Dorsolateral prefrontal cortex (tissue), 120 donors: ENCODE measurements at regions of chr3 and their contacts with region 1.

Region 1: DNA sequence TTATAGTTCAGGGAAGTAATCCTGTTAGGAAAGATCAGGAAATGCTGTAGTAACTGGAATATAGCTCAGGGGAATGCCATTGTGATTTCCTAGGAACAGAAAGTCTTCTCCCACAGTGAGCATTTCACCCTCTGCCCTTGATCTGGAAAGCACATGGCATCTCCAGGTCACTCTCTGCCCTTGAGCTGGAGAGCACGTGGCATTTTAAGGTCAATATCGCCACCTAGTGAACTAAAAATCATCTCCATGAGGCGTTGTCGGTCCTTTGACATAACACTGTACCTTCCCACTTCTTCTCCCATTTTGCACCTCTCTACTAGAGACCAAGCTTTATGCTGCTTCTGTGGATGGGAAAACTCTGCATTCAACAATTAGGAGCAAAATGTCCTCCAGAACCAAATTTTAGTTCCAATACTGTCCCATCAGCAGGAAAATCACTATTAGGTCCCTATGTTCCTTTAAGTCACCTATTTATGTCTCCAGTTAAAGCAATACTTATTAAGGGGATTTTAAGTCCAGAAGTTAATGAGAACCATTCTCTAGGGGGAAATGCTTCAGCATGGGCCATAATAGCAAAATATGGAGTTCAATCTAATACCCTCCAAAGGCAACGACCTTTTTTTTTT is 54.7 kb upstream of the GK5 start:
- DNase-seq: peak in 3 of 10 donors; percentile 18 to 43 (median 21)
- H3K4me3 ChIP-seq: no peak overlapping the region
- H3K27ac ChIP-seq: no peak overlapping the region
- H3K27me3 ChIP-seq: no peaks in the 10 kb centered on the region
- CTCF ChIP-seq: peak in 55 of 56 donors; percentile 47 to 89 (median 70)

Region 2: DNA sequence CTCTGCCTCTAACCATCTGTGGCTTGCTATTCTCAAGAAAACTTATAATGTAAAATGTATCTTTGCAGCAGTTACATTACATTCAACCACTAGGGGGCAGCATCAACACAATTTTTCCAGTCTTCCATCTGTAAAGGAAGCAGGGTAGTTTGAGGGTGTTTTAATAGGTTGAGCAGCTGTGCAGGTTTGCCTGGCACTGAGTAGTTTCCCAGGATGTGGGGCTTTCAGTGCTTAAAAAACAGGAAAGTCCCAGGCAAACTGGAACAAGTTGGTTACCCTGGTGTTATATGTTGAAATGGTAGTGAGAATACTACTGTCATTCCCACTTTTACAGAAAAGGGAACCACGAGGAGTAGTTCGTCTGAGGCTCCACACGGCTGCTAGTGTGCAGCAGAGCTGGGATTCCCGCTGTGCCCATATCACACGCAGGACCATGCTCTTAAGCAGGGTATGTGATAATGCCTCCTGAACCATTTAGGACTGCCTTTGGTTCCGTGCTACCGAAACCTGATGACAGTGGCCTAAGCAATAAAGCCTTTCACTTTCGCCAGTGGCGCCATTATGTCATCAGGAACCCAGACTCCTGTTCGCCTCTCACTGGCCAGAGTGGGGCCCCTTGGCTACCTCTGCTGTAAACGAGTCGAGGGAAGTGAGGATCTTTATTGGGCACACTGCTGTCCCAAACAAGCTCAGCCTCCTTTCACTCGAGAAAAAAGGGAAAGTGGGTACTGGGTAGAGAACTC is 976.4 kb before region 1 on chr3:
- intact Hi-C with region 1: loop called in 1 of 2 experiments (anchors 10 kb)
- DNase-seq: peak in 2 of 10 donors; percentile 58 to 60
- H3K4me3 ChIP-seq: peak overlapping the region in 1 of 59 donors; percentile 2
- H3K27ac ChIP-seq: peak overlapping the region in 9 of 59 donors; percentile 1 to 52 (median 25)
- H3K27me3 ChIP-seq: no peaks in the 10 kb centered on the region
- CTCF ChIP-seq: peak; percentile 70 to 99 (median 88)

Region 3: DNA sequence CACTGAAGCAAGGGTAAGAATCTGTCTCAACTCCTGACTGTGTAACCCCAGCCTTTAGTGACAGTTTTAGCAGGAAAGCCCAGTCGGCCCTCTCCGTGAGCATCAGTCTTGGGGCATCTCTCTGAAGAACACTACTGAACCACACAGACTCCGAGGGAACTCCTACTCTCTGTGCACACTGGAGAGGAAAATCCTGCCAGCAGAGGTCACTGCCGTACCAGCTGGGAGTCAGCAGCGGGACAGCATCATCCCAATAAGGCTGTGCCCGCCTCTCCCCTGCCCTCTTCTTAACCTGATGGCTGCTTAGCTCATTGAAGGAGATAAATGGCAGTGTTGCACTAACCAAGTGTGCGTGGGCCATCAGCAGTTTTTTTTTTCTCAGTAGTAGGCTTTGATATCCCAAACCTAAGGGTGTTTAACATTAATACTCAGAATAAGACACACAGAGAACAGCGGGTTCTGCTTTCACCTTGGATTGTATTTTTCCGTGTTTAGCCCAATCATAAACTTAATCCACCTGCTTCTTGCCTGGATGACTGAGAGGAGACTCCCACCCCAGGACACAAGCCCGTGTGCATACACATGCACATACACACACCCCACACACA is 819.9 kb before region 1 on chr3:
- intact Hi-C with region 1: loop called in 1 of 2 experiments (anchors 10 kb)
- DNase-seq: peak; percentile 80 to 92 (median 88)
- H3K4me3 ChIP-seq: no peak overlapping the region
- H3K27ac ChIP-seq: no peak overlapping the region
- H3K27me3 ChIP-seq: no peaks in the 10 kb centered on the region
- CTCF ChIP-seq: peak; percentile 50 to 98 (median 90)

Region 4: DNA sequence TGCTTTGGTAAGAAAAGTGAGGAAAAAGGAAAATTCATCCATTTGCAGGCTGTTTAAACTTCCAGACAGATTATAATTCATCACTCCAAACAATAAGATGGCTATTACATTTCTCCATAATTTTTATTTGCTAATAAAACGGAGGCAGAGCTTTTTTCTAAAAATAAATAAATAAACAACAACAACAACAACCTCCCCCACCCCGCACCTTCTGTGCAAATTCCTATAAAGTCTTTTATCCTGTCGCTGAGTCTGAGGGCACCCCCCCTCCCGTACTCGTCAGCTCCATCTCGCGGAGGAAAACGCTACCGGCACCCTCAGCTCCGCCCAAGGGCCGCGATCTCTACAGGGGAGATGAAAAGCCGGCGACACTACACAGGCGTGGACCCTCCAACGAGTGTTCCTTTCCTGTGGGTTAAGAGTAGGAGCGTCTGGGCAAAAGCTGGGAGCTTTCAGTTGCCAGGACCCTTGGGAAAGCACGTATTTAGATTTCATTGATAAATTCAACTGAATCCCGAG is 404.6 kb before region 1 on chr3:
- intact Hi-C with region 1: no loop called
- DNase-seq: peak; percentile 72 to 90 (median 85)
- H3K4me3 ChIP-seq: peak overlapping the region; percentile 64 to 98 (median 87)
- H3K27ac ChIP-seq: peak overlapping the region; percentile 78 to 100 (median 98)
- H3K27me3 ChIP-seq: no peaks in the 10 kb centered on the region
- CTCF ChIP-seq: peak; percentile 62 to 91 (median 79)

Region 5: GRCh38 chr3:142022381-142022780 is 257.7 kb before region 1 on chr3:
- intact Hi-C with region 1: loop called in 1 of 2 experiments (anchors 5 kb)
- DNase-seq: no peak
- H3K4me3 ChIP-seq: no peak overlapping the region
- H3K27ac ChIP-seq: no peak overlapping the region
- H3K27me3 ChIP-seq: no peaks in the 10 kb centered on the region
- CTCF ChIP-seq: peak in 14 of 56 donors; percentile 7 to 51 (median 21)

Region 6: GRCh38 chr3:142129516-142130171 is 150.4 kb before region 1 on chr3:
- intact Hi-C with region 1: loop called (anchors 2 to 5 kb)
- DNase-seq: no peak
- H3K4me3 ChIP-seq: no peak overlapping the region
- H3K27ac ChIP-seq: no peak overlapping the region
- H3K27me3 ChIP-seq: no peaks in the 10 kb centered on the region
- CTCF ChIP-seq: no peak

Region 7: DNA sequence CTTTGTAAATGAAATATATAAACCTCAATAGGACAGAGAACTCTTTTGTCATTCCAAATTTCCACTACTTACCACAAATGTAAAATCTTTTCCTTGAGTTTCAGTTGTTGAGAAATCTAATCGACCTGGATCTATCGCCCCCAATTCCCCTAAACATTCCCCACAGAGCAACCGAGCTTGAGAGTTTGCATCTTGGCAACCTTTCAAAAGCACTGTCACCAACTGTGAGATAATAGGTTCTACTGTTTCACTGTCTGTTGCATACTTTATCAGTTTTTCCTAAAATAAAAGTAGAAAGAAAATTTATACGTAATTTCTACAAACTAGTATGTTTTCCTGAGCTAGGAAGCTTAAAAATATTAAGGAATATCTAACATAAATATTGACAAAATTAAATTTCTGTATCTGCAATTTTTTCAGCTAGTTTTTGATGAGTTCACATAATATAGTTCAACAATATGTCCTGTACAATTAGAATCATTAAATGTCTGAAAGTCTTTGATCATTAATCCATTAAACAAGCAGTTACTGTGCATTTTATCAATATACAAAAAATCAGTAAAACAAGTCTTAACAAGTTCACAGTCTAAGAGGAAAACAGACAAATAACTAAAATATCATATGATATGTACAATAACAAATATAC is 244.0 kb after region 1 on chr3:
- intact Hi-C with region 1: no loop called
- DNase-seq: no peak
- H3K4me3 ChIP-seq: no peak overlapping the region
- H3K27ac ChIP-seq: no peak overlapping the region
- H3K27me3 ChIP-seq: no peaks in the 10 kb centered on the region
- CTCF ChIP-seq: no peak